MCF 10A (cell line): ENCODE measurements at regions of chr3 and their contacts with region 1.

Region 1: GRCh38 chr3:137105277-137105977 is 147.6 kb downstream of the IL20RB start:
- DNase-seq: peak; percentile 69
- H3K4me3 Mint-ChIP-seq: no peak overlapping the region
- H3K27ac Mint-ChIP-seq: no peak overlapping the region
- H3K4me1 Mint-ChIP-seq: no peaks in the 10 kb centered on the region
- H3K27me3 Mint-ChIP-seq: no peaks in the 10 kb centered on the region
- CTCF ChIP-seq: peak; percentile 56

Region 2: GRCh38 chr3:137116619-137117018 is 11.2 kb after region 1 on chr3:
- CTCF ChIA-PET with region 1: interaction called, 23 read pairs
- POLR2A ChIA-PET with region 1: interaction called, 3 read pairs
- intact Hi-C with region 1: no loop called
- DNase-seq: peak; percentile 13
- H3K4me3 Mint-ChIP-seq: no peak overlapping the region
- H3K27ac Mint-ChIP-seq: no peak overlapping the region
- H3K4me1 Mint-ChIP-seq: peaks cover 7% of the 10 kb centered on the region
- H3K27me3 Mint-ChIP-seq: no peaks in the 10 kb centered on the region
- CTCF ChIP-seq: no peak

Region 3: GRCh38 chr3:137692803-137693431 is 587.5 kb after region 1 on chr3:
- CTCF ChIA-PET with region 1: interaction called, 9 read pairs
- POLR2A ChIA-PET with region 1: no interaction called
- intact Hi-C with region 1: loop called (anchors 1 kb)
- DNase-seq: peak; percentile 55
- H3K4me3 Mint-ChIP-seq: no peak overlapping the region
- H3K27ac Mint-ChIP-seq: no peak overlapping the region
- H3K4me1 Mint-ChIP-seq: no peaks in the 10 kb centered on the region
- H3K27me3 Mint-ChIP-seq: peaks cover 36% of the 10 kb centered on the region
- CTCF ChIP-seq: peak; percentile 57

Region 4: DNA sequence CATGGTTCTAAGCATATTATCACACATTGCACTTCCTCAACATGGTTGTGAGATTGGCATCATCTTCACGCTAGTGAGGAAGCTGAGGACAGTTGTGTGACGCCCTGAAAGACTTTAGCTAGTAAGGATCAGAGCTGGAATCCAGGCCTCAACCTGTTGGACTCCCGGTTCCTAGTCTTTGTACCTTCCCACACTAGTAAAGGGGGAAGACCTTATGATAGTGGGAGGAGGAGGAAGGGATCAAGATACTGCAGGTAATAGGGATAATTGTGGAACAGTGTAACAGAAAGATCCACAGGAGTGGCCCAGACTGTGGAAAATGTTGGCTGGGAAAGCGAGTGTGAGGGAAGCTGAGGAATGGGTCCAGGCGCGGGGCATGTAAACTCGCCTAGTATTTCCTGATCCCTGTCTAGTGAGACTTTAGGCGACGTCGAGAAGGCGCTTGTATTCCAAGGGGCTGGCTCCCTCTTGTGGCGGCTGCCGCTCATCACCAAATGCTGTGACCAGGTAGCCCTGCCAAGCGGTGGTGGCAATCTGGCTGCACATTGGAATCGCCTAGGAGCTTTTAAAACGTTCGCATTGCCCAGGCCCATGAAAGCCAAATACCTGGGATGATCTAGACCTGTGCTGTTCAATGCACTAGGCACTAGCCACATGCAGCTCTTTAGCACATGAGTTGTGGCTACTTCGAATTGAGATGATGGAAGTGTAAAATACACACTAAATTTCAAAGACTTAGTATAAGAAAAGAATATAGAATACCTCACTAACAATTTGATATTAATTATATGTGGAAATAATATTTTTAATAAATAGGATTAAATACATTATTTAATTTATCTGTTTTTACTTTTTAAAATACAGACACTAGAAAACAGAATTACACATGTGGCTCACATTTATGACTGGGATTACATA is 865.7 kb after region 1 on chr3:
- CTCF ChIA-PET with region 1: interaction called, 27 read pairs
- POLR2A ChIA-PET with region 1: interaction called, 3 read pairs
- intact Hi-C with region 1: loop called (anchors 1 kb)
- DNase-seq: peak; percentile 80
- H3K4me3 Mint-ChIP-seq: no peak overlapping the region
- H3K27ac Mint-ChIP-seq: no peak overlapping the region
- H3K4me1 Mint-ChIP-seq: no peaks in the 10 kb centered on the region
- H3K27me3 Mint-ChIP-seq: no peaks in the 10 kb centered on the region
- CTCF ChIP-seq: peak; percentile 88

Region 5: DNA sequence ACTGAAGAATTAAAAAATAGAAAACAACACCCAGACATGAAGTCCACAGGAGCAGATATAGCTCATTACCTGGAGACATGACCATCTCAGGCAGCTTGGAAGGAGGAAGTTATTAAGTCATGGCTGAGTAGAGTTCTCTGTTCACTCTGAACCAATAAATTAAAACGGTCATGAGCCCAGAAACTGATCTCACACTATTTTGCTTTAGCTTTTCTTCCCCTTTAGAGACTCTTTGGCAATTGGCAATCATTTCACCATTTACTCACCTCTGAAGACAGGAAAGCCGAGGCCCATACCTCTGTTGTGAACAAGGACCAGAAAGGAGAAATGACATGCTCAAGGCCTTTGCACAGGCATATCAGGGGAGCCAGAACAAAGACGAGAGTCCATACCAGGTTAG is 931.1 kb after region 1 on chr3:
- CTCF ChIA-PET with region 1: no interaction called
- POLR2A ChIA-PET with region 1: no interaction called
- intact Hi-C with region 1: no loop called
- DNase-seq: no peak
- H3K4me3 Mint-ChIP-seq: no peak overlapping the region
- H3K27ac Mint-ChIP-seq: no peak overlapping the region
- H3K4me1 Mint-ChIP-seq: no peaks in the 10 kb centered on the region
- H3K27me3 Mint-ChIP-seq: no peaks in the 10 kb centered on the region
- CTCF ChIP-seq: no peak